ENCODE measurements at regions of chr17 and their contacts with region 1.

Region 1: DNA sequence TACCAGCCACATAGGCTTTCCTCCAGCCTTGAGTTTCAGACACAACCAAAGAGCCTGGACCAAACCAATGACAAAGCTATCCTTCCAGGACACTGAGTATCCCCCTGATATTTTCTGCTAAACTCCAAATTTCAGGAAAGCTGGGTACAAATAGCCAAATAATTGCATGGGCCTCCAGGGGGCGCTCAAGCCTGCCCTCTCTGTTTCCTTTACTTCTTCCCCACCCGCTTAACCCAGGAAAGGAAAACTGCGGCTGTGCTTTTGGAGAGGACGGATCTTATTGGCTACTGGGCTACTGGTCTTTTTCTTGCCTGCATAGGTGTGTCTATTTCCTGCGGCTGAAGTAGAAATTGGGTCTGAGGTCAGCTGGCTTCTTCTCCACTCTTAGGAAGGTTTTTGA is 30.1 kb downstream of the GNGT2 start:
- DNase-seq: peak; percentile 28
- ATAC-seq: peak; percentile 78
- H3K4me3 ChIP-seq: no peak overlapping the region
- H3K27ac ChIP-seq: no peak overlapping the region
- H3K4me1 ChIP-seq: no peaks in the 10 kb centered on the region
- H3K27me3 ChIP-seq: no peaks in the 10 kb centered on the region
- CTCF ChIP-seq: peak; percentile 81 to 88 (median 88)
- EP300 ChIP-seq: no peak
- POLR2A ChIP-seq: no peak
- RAD21 ChIP-seq: peak; percentile 91

Region 2: GRCh38 chr17:49170216-49170615 is 10.1 kb before region 1 on chr17:
- CTCF ChIA-PET with region 1: interaction called, 15 read pairs
- POLR2A ChIA-PET with region 1: no interaction called
- RAD21 ChIA-PET with region 1: no interaction called
- SMC1A ChIA-PET with region 1: no interaction called
- in situ Hi-C with region 1: no loop called
- intact Hi-C with region 1: no loop called
- DNase-seq: no peak
- ATAC-seq: no peak
- H3K4me3 ChIP-seq: no peak overlapping the region
- H3K27ac ChIP-seq: no peak overlapping the region
- H3K4me1 ChIP-seq: no peaks in the 10 kb centered on the region
- H3K27me3 ChIP-seq: no peaks in the 10 kb centered on the region; a peak in 2 of 4 replicates
- CTCF ChIP-seq: no peak
- EP300 ChIP-seq: no peak
- POLR2A ChIP-seq: no peak
- RAD21 ChIP-seq: no peak

Region 3: GRCh38 chr17:49210158-49211029 is 30.1 kb after region 1 on chr17 and contains the starts of genes ABI3 and GNGT2:
- CTCF ChIA-PET with region 1: interaction called, 45 read pairs
- POLR2A ChIA-PET with region 1: interaction called, 3 read pairs
- RAD21 ChIA-PET with region 1: interaction called, 27 read pairs
- SMC1A ChIA-PET with region 1: interaction called, 28 read pairs
- in situ Hi-C with region 1: no loop called
- intact Hi-C with region 1: no loop called
- DNase-seq: peak; percentile 92
- ATAC-seq: peak; percentile 90
- H3K4me3 ChIP-seq: peak within 1 kb of the TSS; percentile 98
- H3K27ac ChIP-seq: peak within 1 kb of the TSS; percentile 96
- H3K4me1 ChIP-seq: peaks cover 29% of the 10 kb centered on the region
- H3K27me3 ChIP-seq: no peaks in the 10 kb centered on the region
- CTCF ChIP-seq: no peak
- EP300 ChIP-seq: peak; percentile 29; a peak in 2 of 4 replicates
- POLR2A ChIP-seq: peak; percentile 97
- RAD21 ChIP-seq: peak; percentile 16; the same call in 1 of the 2 replicates
- polyA plus RNA-seq, gene ABI3: 13.4 to 21.7 TPM
- polyA plus RNA-seq, gene GNGT2: 15.3 to 22.6 TPM

Region 4: DNA sequence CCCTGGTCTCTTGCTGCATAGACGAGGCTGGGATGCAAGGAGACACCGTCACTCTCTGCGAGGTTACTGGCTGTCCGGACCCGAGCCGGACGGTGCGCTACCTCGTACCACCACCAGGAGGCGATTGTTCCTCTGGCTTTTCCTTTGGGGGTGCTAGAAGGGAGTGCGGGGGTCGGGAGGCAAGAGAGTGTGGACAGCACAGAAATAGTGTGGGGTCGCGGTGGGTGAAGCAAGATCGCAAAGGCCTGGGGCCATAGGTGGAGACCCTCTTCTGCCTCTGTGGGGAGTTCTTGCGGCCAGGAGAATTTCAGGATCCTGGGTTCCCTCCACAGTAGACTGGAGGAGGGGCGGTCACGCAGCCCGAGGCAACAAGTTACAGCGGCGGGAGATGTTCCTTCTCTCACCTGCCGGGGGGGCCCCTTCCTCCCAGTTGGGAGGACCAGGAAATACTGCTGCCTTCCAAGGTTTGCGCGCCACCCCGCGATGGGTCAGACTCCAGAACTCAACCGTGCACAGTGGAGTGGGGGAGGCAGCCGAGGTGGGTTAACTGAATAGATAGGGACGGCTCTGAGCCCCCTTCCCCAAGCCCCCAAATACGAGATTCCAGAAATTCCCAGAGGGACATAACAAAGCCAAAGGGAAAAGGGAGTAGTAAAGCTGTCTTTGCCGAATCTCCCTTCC is 43.4 kb after region 1 on chr17:
- CTCF ChIA-PET with region 1: interaction called, 178 read pairs
- POLR2A ChIA-PET with region 1: interaction called, 4 read pairs
- RAD21 ChIA-PET with region 1: interaction called, 72 read pairs
- SMC1A ChIA-PET with region 1: interaction called, 118 read pairs
- in situ Hi-C with region 1: loop called (anchors 10 kb)
- intact Hi-C with region 1: loop called (anchors 1 kb)
- DNase-seq: no peak
- ATAC-seq: peak; percentile 28
- H3K4me3 ChIP-seq: peak overlapping the region; percentile 48; the same call in 1 of the 2 replicates
- H3K27ac ChIP-seq: no peak overlapping the region
- H3K4me1 ChIP-seq: peaks cover 41% of the 10 kb centered on the region
- H3K27me3 ChIP-seq: no peaks in the 10 kb centered on the region
- CTCF ChIP-seq: peak; percentile 66 to 88 (median 86)
- EP300 ChIP-seq: no peak
- POLR2A ChIP-seq: peak; percentile 63
- RAD21 ChIP-seq: peak; percentile 42

Region 5: DNA sequence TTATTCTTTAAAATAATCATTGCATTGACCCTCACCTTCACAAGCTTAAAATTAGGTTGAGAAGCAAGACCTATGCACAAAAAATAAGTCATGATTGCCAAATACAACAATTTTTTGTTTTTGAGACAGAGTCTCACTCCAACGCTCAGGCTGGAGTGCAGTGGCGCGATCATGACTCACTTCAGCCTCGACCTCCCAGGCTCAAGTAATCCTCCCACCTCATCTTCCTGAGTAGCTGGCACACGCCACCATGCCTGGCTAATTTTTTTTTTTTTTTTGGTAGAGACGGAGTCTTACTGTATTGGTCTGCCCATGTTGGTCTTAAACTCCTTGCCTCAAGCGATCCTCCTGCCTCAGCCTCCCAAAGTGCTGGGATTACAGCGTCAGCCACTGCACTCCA is 157.6 kb after region 1 on chr17:
- CTCF ChIA-PET with region 1: no interaction called
- POLR2A ChIA-PET with region 1: interaction called, 10 read pairs
- RAD21 ChIA-PET with region 1: no interaction called
- SMC1A ChIA-PET with region 1: no interaction called
- in situ Hi-C with region 1: no loop called
- intact Hi-C with region 1: no loop called
- DNase-seq: no peak
- ATAC-seq: no peak
- H3K4me3 ChIP-seq: no peak overlapping the region
- H3K27ac ChIP-seq: no peak overlapping the region
- H3K4me1 ChIP-seq: peaks cover 16% of the 10 kb centered on the region
- H3K27me3 ChIP-seq: no peaks in the 10 kb centered on the region
- CTCF ChIP-seq: no peak
- EP300 ChIP-seq: no peak
- POLR2A ChIP-seq: no peak
- RAD21 ChIP-seq: no peak